Naive thymus-derived CD8-positive, alpha-beta T cell (primary cell): ENCODE measurements at regions of chr10 and their contacts with region 1.

Region 1: DNA sequence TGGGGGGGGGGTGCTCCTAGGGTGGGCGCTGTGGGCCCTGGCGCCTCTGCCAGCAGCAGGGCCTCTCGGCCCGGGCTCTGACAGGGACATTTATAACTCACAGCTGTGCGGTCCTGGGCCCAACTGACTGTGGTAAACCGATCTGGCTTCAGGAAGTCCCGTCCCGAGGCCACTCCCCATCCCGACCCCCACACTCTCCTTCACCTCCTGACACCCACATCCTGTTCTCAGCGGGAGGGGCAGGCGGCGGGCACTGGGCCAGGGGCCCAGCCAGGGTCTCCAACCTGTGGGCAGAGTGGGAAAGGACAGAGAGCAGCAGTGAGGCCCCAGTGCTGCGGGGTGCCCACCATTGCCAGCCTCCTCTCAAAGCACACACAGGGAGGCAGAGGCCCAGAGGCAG is 69.1 kb downstream of the ZMIZ1 start:
- DNase-seq: peak in 9 of 10 donors; percentile 9 to 70 (median 31)
- ATAC-seq: peak; percentile 72 to 75
- H3K4me3 Mint-ChIP-seq: peak overlapping the region; percentile 60 to 84 (median 77)
- H3K27ac Mint-ChIP-seq: peak overlapping the region; percentile 83 to 92 (median 89)
- H3K4me1 Mint-ChIP-seq: peaks cover 42 to 83% (median 80%) of the 10 kb centered on the region in 4 donors
- H3K27me3 Mint-ChIP-seq: no peaks in the 10 kb centered on the region

Region 2: DNA sequence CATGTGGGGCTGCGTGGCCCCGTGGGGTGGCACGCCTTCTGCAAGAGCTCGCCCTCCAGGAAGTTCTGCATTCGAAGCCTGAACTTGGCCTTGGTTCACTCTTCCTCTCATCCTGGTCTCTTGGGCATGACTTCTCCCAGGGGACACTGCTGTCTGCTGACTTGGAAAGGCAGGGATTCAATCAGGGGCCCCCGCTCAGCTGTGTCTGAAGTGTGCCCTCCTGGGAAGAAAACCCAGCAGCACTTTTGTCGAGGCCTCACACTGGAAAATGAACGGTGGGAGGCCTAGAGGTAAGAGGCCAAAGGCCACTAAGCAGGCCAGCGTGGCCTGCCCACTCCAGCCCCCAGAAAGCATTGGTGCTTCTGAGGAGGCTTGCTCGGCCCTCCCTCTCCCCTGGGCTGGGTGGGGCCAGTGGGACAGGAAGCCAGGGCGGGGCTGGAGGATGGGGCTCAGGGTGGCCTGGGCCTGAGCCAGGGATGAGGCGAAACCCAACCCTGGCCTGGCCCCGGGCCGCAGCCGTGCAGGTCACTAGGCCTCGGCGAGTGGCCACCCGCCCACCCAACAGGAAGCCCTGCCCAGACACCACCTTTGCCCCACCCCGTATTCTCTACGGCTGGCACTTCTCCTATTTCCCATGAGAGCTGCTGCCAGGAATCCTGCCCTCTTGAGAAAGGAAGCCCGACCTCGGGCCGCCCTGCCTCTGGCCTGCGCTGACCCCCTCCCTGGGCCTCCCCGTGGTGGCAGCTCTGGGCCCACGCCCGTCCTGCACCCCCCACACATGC is 12.0 kb after region 1 on chr10:
- POLR2A ChIA-PET with region 1: interaction called, 13 read pairs
- DNase-seq: peak in 7 of 10 donors; percentile 18 to 71 (median 37)
- ATAC-seq: peak; percentile 75 to 78
- H3K4me3 Mint-ChIP-seq: peak overlapping the region; percentile 12 to 69 (median 54)
- H3K27ac Mint-ChIP-seq: peak overlapping the region in 9 of 10 donors; percentile 78 to 89 (median 84)
- H3K4me1 Mint-ChIP-seq: peaks cover 28 to 69% (median 65%) of the 10 kb centered on the region in 4 donors
- H3K27me3 Mint-ChIP-seq: no peaks in the 10 kb centered on the region

Region 3: DNA sequence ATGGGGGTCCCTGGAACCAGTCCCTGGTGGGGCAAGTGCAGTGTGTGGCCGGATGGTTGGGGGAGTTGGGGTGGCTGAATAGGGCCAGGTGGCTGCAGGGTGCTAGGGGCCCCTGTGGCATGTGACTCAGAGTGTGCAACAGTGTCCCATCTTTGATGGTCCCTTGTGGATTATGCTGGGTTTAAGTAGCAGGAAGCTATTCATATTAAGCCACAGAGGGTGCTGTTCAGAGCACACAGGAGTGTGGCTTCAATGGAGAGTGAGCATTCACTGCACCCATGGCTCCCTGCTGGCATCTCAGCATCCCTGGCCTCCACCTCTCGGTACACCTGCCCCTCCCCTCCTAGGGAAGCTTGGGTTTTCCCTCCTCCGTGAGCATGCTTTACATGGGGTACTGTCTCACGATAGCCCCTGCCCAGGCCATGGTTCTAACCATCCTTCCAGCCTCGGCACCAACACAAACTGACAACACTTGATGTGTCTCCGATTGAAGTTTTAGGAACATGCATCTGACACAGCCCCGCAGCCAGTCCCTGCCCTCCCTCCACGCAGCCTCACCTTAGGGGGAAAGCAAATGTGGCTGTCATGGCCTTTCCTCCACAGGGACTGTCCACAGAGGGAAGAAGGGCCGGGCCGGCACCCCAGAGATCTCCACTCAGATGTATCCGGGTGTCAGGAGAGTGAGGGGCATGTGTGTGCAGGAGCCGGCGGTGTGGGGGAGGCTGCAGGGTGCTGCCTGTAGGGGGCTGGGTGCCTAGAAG is 179.0 kb after region 1 on chr10:
- POLR2A ChIA-PET with region 1: no interaction called
- DNase-seq: no peak
- ATAC-seq: peak; percentile 35 to 49
- H3K4me3 Mint-ChIP-seq: peak overlapping the region in 9 of 10 donors; percentile 39 to 88 (median 59)
- H3K27ac Mint-ChIP-seq: peak overlapping the region in 2 of 10 donors; percentile 36 to 87
- H3K4me1 Mint-ChIP-seq: peaks cover 34 to 62% (median 54%) of the 10 kb centered on the region in 4 donors
- H3K27me3 Mint-ChIP-seq: peaks cover 0 to 2% (median 0%) of the 10 kb centered on the region in 5 donors